ENCODE measurements at regions of chr13 and their contacts with region 1.

Region 1: GRCh38 chr13:78121459-78122348 is 203.1 kb upstream of the EDNRB start:
- DNase-seq: no peak
- H3K4me3 ChIP-seq: no peak overlapping the region
- CTCF ChIP-seq: peak; percentile 63

Region 2: DNA sequence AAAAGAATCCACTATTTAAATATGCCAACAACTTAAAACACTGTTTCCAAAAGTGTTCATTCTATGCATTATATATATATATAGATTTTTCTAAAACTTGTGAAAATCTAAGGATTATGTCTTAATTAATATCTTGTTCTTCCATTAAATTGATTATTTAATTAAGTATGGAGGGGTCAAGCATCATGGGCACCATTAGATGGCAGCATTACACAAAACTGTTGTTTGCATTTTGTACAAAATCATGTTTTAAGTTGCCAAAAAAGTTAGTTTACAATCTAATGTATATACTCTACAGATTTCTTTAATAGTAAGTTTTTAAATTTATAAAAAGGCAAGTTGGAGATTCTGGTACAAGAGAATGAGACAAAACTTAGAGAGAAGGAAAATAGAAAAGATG is 10.1 kb after region 1 on chr13:
- CTCF ChIA-PET with region 1: interaction called, 24 read pairs
- POLR2A ChIA-PET with region 1: no interaction called
- DNase-seq: no peak
- H3K4me3 ChIP-seq: no peak overlapping the region
- CTCF ChIP-seq: no peak

Region 3: DNA sequence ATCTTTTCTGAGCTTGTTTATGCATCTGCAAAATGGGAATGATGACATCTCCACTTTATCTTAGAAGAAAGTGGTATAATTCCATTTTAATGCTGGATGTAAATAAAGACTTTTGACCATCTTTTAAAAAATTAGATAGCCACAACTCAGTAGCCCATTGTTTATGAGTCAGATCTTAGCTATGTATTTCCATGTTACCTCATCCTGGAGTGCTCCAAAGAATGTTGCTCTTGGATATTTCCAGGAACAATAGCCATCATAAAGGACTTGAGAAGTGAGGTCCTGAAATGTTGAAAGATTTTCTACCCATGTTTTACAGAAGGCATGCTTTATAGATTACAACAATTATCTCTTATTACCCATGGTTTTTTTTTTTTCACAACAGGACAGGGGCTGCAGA is 26.2 kb after region 1 on chr13:
- CTCF ChIA-PET with region 1: interaction called, 15 read pairs
- POLR2A ChIA-PET with region 1: no interaction called
- DNase-seq: no peak
- H3K4me3 ChIP-seq: no peak overlapping the region
- CTCF ChIP-seq: no peak

Region 4: DNA sequence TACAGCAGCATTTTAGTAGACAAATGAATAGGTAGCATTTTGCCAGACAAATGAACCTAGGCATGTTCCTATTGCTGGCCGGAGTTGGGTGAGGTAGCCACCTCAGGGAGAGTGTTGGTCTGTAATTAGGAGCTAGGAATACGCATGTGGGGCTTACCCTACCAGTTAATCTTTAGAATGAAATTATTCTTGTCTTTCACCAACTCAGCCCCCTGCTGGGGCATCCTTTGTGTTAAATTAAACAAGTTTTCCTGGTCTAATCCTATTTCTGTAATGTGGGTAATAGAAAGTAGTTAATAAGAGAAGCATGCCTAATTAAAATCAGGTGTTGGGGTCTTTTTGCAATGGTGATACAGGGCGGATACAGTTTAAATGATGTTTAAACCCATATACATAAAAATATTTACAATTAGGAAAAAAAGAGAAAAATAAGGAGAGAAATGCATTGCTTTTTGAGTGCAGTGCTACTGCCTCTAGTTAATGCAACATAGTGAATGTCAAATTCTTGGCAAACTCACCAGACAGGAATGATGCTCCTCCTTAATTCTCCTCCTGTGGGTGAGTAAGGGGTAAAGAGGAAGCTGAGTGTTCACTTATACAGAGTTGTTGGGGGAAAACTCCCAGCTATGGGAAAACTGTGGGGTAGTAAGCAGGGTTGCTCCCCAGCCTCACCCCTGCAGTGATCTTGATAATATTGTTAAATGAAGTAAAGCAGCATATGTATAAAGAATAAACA is 73.4 kb after region 1 on chr13:
- CTCF ChIA-PET with region 1: no interaction called
- POLR2A ChIA-PET with region 1: no interaction called
- DNase-seq: peak; percentile 5
- H3K4me3 ChIP-seq: no peak overlapping the region
- CTCF ChIP-seq: no peak

Measured in AG04449 (cell line).